Psoas muscle (tissue), 8 donors: ENCODE measurements at regions of chr6 and their contacts with region 1.

Region 1: GRCh38 chr6:43334466-43335095 is 26.0 kb upstream of the CRIP3 start:
- DNase-seq: no peak
- ATAC-seq: peak; percentile 57 to 67 (median 62)
- H3K4me3 ChIP-seq: no peak overlapping the region
- H3K27ac ChIP-seq: peak overlapping the region; percentile 14
- H3K4me1 ChIP-seq: peaks cover 8% of the 10 kb centered on the region
- H3K27me3 ChIP-seq: no peaks in the 10 kb centered on the region
- CTCF ChIP-seq: peak; percentile 48

Region 2: GRCh38 chr6:42819803-42820511 is 514.6 kb before region 1 on chr6:
- intact Hi-C with region 1: no loop called
- DNase-seq: no peak
- ATAC-seq: peak; percentile 60 to 75 (median 72)
- H3K4me3 ChIP-seq: no peak overlapping the region
- H3K27ac ChIP-seq: peak overlapping the region; percentile 79
- H3K4me1 ChIP-seq: peaks cover 39% of the 10 kb centered on the region
- H3K27me3 ChIP-seq: no peaks in the 10 kb centered on the region
- CTCF ChIP-seq: peak; percentile 35

Region 3: GRCh38 chr6:43269273-43270007 is 65.1 kb before region 1 on chr6:
- intact Hi-C with region 1: loop called in 1 of 2 experiments (anchors 5 kb)
- DNase-seq: peak in 1 of 2 donors; percentile 41
- ATAC-seq: peak; percentile 13 to 62 (median 32)
- H3K4me3 ChIP-seq: peak overlapping the region; percentile 56
- H3K27ac ChIP-seq: no peak overlapping the region
- H3K4me1 ChIP-seq: peaks cover 5% of the 10 kb centered on the region
- H3K27me3 ChIP-seq: peaks cover 0 to 23% (median 9%) of the 10 kb centered on the region in 3 donors
- CTCF ChIP-seq: no peak